HEK293 (cell line): ENCODE measurements at regions of chr4 and their contacts with region 1.

Region 1: DNA sequence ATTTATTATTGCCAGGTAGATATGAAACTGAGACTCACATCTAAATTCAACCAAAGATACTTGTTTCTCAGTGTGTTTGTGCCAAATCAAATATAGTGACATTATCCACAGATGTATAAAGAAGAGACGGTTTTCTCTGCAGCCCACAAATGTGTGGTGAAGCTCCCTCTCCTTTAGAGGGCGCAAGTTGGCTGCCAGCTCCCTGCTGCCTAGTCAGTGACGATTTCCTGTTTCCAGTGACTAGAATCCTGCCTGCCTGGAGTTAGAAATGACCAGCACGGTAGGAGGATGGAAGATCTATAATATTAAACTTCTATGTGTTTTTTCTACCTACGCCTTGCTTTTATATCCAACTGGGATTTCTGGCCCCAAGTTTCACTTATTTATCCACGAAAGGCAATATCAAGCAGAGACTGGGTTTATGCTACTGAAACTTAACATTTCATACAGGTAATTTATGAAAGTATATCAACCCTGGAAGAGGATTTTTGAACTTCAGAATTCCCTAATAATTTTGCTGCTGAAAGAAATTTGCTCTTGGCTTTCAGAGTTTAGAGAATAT is 1793.7 kb upstream of the TENM3 start:
- H3K4me3 ChIP-seq: peak overlapping the region; percentile 25
- H3K27ac ChIP-seq: no peak overlapping the region
- H3K4me1 ChIP-seq: no peaks in the 10 kb centered on the region
- CTCF ChIP-seq: 0 out of 2 replicates have a peak, but pooled peaks have one; percentile 13

Region 2: GRCh38 chr4:180341926-180342325 is 107.5 kb before region 1 on chr4:
- CTCF ChIA-PET with region 1: no interaction called
- POLR2A ChIA-PET with region 1: no interaction called
- H3K4me3 ChIP-seq: no peak overlapping the region
- H3K27ac ChIP-seq: no peak overlapping the region
- H3K4me1 ChIP-seq: no peaks in the 10 kb centered on the region
- CTCF ChIP-seq: no peak

Region 3: DNA sequence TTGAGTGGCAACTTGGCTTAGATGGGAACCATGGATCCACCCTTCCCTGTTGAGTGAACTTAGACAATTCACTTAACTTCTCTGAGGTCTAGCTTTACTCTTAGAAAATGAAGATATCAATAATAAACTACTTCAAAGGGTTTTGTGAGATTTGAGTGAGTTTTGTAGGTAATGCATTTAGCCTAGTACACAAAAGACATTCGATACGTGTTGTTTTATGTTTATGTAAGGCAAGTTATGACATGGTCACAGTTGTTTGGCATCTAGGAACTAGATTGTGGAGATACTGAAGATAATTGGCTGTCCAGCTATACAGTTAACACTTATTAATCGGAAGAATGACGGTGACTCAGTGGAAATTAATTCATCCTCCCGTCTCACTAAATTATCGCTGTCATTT is 12.6 kb after region 1 on chr4:
- CTCF ChIA-PET with region 1: interaction called, 20 read pairs
- POLR2A ChIA-PET with region 1: no interaction called
- H3K4me3 ChIP-seq: no peak overlapping the region
- H3K27ac ChIP-seq: no peak overlapping the region
- H3K4me1 ChIP-seq: no peaks in the 10 kb centered on the region
- CTCF ChIP-seq: no peak

Region 4: DNA sequence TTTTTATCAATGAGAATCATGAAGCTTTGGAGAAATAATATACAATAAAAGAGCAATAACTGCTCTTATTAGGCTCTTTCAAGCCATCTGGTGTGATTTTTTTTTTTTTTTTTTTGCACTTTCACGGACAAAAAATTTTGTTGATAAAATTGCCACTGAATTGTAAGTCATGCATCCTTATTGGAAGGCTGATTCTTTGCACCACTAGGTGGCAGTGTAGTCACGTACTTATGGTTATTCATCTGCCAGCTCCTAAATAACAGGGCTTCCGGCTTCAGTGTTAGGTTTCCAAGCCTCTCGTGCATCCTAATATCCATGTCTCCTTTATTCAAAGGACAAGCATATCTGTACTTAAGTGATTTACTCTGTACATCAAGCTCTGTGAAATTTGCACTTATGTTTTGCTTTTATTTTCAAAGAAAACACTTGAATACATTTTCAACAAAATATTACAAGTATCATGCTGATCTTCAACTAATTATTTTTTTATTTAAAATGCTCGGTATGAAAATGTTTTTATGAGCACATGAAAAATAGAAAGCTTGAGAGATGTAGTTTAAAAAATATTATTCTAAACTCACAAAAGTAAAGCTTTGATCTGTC is 215.4 kb after region 1 on chr4:
- CTCF ChIA-PET with region 1: interaction called, 21 read pairs
- POLR2A ChIA-PET with region 1: no interaction called
- H3K4me3 ChIP-seq: no peak overlapping the region
- H3K27ac ChIP-seq: no peak overlapping the region
- H3K4me1 ChIP-seq: no peaks in the 10 kb centered on the region
- CTCF ChIP-seq: no peak